Adrenal gland (tissue), 19 donors: ENCODE measurements at regions of chr14 and their contacts with region 1.

Region 1: GRCh38 chr14:33792720-33793368 is 158.0 kb downstream of the EGLN3 start:
- DNase-seq: peak; percentile 72 to 90 (median 82)
- H3K4me3 ChIP-seq: peak overlapping the region in 1 of 4 donors; percentile 12
- H3K27ac ChIP-seq: no peak overlapping the region
- H3K4me1 ChIP-seq: peaks cover 5 to 16% of the 10 kb centered on the region in 2 donors
- H3K27me3 ChIP-seq: no peaks in the 10 kb centered on the region
- CTCF ChIP-seq: peak; percentile 81 to 96 (median 88)
- POLR2A ChIP-seq: no peak

Region 2: DNA sequence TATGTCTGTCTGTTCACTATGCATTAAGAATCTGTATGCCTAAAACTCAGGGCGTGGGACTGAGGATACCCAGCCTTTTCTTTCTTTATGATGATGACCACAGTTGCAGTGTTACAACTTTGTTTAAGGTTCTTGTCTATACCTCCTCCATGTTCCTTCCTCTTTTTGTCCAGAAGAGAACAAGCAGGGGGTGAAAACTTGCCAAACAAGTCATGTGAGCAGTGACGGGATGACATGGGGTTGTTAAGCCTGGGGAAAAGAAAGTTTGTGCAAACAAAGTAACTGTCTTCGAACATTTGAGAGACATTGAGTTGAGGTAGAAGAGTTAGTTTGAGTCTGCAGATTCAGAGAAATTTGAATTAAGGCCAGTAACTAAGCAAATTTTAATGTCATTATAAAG is 348.7 kb before region 1 on chr14:
- intact Hi-C with region 1: loop called in 1 of 2 experiments (anchors 10 kb)
- DNase-seq: peak in 1 of 7 donors; percentile 10
- H3K4me3 ChIP-seq: no peak overlapping the region
- H3K27ac ChIP-seq: no peak overlapping the region
- H3K4me1 ChIP-seq: no peaks in the 10 kb centered on the region
- H3K27me3 ChIP-seq: no peaks in the 10 kb centered on the region
- CTCF ChIP-seq: no peak
- POLR2A ChIP-seq: no peak